ENCODE measurements at regions of chr6 and their contacts with region 1.

Region 1: DNA sequence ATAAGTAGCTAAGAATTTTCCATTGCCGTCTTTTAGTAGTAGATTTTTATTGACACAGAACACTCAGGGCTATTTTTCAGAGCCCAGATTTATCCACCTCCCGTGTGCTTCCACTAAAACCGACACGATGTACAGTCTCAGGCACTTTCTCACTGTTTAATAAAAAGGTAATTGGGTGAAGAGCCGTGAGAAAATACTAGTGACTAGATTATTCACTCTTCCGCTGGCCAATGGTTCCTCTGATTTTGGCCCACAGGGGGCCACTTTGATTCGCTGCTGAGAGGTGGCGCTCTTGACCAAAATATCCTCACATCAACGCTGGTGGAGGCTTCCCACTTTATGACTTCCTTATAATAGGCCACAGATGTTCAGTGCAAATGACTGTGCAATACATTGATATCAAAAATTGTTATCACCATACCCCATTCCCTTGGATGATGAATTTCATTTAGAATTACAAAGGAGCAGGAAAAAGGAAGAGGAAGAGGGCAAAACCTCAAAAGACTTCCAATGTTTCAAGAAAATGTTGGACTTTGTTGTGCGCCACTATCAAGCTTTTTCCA is 12.3 kb upstream of the HDDC2 start:
- DNase-seq: peak; percentile 27 to 53
- ATAC-seq: peak; percentile 90 to 93
- H3K4me3 ChIP-seq: no peak overlapping the region
- H3K27ac ChIP-seq: no peak overlapping the region
- H3K4me1 ChIP-seq: peaks cover 15% of the 10 kb centered on the region; the same call in 2 of the 3 replicates
- CTCF ChIP-seq: peak; percentile 81
- EP300 ChIP-seq: no peak
- POLR2A ChIP-seq: no peak
- RAD21 ChIP-seq: peak; percentile 84 to 86

Region 2: DNA sequence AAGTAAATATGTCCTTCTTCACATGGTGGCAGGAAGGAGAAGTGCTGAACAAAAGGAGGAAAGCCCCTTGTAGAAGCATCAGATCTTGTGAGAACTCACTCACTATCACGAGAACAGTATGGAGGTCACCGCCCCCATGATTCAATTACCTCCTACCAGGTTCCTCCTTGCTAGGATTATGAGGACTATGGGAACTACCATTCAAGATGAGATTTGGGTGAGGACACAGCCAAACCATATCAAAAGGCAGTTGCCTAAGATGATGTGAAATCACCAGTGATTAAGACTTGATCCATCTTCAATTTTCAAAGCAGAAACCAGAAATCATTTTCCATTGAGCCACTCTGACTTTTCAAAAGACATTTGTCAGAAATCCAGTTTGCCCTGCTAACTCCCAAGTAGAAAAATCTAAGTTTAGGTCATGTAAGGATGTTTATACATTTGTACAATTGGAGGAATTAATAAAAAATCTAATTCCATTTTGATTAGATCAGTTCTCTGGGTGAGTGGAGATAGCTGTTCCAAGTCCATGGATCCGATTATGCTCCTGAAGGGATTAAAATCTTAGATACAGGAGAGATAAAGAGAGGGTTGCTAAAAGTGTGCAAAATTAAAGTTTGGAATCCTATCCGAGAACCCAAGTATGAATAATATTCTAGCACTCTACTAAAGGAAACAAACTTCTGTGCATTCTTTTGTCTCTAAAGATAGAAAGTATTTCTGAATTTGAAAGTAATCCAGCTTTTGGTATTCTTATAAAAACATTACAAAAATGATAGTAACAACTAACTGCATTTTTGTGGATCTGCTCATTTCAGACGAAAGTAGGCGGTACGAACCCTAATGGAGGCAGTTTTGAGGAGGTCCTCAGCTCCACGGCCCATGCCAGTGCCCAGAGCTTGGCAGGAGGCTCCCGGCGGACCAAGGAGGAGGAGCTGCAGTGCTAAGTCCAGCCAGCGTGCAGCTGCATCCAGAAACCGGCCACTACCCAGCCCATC is 51.8 kb before region 1 on chr6:
- CTCF ChIA-PET with region 1: no interaction called
- POLR2A ChIA-PET with region 1: no interaction called
- DNase-seq: no peak
- ATAC-seq: no peak
- H3K4me3 ChIP-seq: no peak overlapping the region
- H3K27ac ChIP-seq: no peak overlapping the region
- H3K4me1 ChIP-seq: 0 out of 3 replicates have a peak, but pooled peaks cover 3% of the 10 kb centered on the region
- CTCF ChIP-seq: no peak
- EP300 ChIP-seq: no peak
- POLR2A ChIP-seq: no peak
- RAD21 ChIP-seq: no peak

Region 3: GRCh38 chr6:125325586-125325985 is 11.5 kb after region 1 on chr6:
- CTCF ChIA-PET with region 1: interaction called, 13 read pairs
- POLR2A ChIA-PET with region 1: no interaction called
- DNase-seq: no peak
- ATAC-seq: no peak
- H3K4me3 ChIP-seq: no peak overlapping the region
- H3K27ac ChIP-seq: no peak overlapping the region
- H3K4me1 ChIP-seq: no peaks in the 10 kb centered on the region
- CTCF ChIP-seq: no peak
- EP300 ChIP-seq: no peak
- POLR2A ChIP-seq: no peak
- RAD21 ChIP-seq: no peak

Region 4: DNA sequence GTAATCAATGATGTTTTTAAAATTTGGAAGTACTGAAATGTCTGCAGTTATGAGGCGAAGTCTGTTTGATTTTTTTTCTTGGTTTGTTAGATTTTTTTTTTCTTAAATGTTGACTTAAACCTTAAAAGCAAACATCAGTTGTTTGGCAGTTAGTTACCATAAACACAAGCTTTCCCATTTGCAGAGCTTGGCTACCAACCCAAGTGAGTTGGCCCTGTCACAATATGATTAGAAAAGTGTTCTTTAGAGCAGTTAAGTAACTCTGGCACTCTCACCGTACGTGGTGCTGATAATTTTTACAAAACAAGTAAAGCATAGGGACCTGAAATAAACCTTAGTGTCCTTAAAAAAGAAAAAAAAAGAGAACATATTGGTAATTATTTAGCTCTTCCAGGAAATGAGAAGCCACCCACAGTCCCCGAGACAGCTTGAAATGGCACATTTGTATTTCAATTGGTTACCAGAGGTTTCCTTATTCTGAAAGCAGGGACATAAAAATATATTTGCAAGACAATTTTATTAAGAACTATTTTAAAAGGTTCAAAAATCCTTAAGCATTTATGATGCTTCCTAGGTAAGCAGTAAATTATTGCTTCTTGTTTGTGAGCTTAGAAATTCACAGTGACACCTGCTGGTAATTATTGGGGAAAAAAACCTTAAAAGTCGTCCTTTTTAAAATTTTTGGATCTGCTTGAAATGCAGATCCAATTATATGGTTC is 439.3 kb after region 1 on chr6:
- CTCF ChIA-PET with region 1: interaction called, 288 read pairs
- POLR2A ChIA-PET with region 1: interaction called, 7 read pairs
- DNase-seq: peak in 1 of 2 experiments; percentile 39
- ATAC-seq: no peak
- H3K4me3 ChIP-seq: no peak overlapping the region
- H3K27ac ChIP-seq: no peak overlapping the region
- H3K4me1 ChIP-seq: peaks cover 9% of the 10 kb centered on the region; the same call in 2 of the 3 replicates
- CTCF ChIP-seq: peak; percentile 55
- EP300 ChIP-seq: no peak
- POLR2A ChIP-seq: no peak
- RAD21 ChIP-seq: peak; percentile 42 to 45; a peak in 3 of 5 replicates

Region 5: DNA sequence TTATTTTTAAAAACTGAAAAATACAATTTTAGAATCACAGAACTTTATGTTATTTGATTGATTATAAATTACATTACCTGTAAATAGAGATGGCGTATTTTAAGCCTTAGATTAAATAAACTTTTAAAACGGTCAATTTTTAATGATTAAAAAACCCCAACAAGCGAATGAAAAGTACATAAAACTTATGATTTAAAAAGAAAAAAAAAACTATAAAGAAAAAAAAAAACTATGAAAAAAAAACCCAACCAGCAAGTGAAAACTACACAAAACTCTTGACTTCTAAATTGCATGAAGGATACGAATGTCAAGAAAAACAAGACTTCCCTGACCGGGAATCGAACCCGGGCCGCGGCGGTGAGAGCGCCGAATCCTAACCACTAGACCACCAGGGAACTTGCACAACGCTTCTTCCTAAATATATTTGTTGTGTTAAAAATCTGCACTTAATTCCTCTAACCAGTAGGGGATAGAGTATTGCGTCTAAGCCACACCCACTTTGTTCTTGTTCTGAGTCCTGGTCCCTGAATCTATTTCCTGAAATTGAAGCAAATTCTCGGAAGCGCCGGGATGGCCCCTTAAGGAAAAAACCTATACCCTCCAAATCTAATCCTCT is 465.9 kb after region 1 on chr6:
- CTCF ChIA-PET with region 1: interaction called, 11 read pairs
- POLR2A ChIA-PET with region 1: no interaction called
- DNase-seq: peak; percentile 75 to 91
- ATAC-seq: peak; percentile 85 to 89
- H3K4me3 ChIP-seq: peak overlapping the region; percentile 53
- H3K27ac ChIP-seq: peak overlapping the region; percentile 88 to 91
- H3K4me1 ChIP-seq: peaks cover 23% of the 10 kb centered on the region
- CTCF ChIP-seq: no peak
- EP300 ChIP-seq: no peak
- POLR2A ChIP-seq: no peak
- RAD21 ChIP-seq: no peak

Measured in A549 (cell line).